Mucosa of descending colon (tissue), 3 donors: ENCODE measurements at regions of chr1 and their contacts with region 1.

Region 1: GRCh38 chr1:247833601-247834000 is 8.1 kb downstream of the OR11L1 start:
- DNase-seq: no peak
- ATAC-seq: no peak
- H3K4me3 ChIP-seq: no peak overlapping the region
- H3K4me1 ChIP-seq: no peaks in the 10 kb centered on the region
- CTCF ChIP-seq: no peak

Region 2: DNA sequence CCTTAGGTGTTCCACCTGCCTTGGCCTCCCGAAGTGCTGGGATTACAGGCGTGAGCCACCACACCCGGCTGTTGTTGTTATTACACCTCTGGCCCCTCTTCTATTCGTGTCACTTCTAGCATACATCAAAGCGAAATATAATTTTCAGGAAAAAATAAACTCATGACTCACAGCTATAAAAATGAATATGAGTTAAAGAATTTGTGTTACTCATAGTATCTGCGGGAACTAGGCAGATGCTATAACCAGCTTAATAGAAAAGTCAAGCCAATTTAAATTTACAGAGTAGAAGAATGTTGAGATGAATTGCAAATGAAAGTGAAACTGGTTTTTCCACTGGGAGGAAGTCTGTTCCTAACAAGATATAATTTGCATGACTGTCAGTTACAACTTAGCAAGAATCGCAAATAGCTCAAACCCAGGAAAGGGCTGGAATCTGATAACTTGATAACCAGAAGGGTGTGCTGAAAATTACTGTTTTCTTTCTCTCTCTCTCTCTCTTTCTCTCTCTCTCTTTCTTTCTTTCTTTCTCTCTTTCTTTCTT is 73.0 kb after region 1 on chr1:
- intact Hi-C with region 1: loop called in 1 of 2 experiments (anchors 10 kb)
- DNase-seq: no peak
- ATAC-seq: peak; percentile 85
- H3K4me3 ChIP-seq: no peak overlapping the region
- H3K4me1 ChIP-seq: no peaks in the 10 kb centered on the region
- CTCF ChIP-seq: no peak

Region 3: GRCh38 chr1:248065071-248065470 is 231.5 kb after region 1 on chr1:
- intact Hi-C with region 1: no loop called
- DNase-seq: no peak
- ATAC-seq: no peak
- H3K4me3 ChIP-seq: no peak overlapping the region
- H3K4me1 ChIP-seq: no peaks in the 10 kb centered on the region
- CTCF ChIP-seq: no peak